CD8-positive, alpha-beta T cell (primary cell): ENCODE measurements at regions of chr17 and their contacts with region 1.

Region 1: GRCh38 chr17:39980351-39981206 is at the start of gene PSMD3:
- DNase-seq: peak; percentile 95 to 100 (median 97)
- ATAC-seq: peak; percentile 94
- H3K4me3 ChIP-seq: peak within 1 kb of the TSS; percentile 67 to 83
- H3K4me3 Mint-ChIP-seq: peak within 1 kb of the TSS; percentile 93
- H3K27ac ChIP-seq: peak within 1 kb of the TSS; percentile 90 to 91
- H3K27ac Mint-ChIP-seq: peak within 1 kb of the TSS; percentile 97
- H3K4me1 ChIP-seq: peaks cover 25% of the 10 kb centered on the region
- H3K4me1 Mint-ChIP-seq: peaks cover 33% of the 10 kb centered on the region
- H3K27me3 ChIP-seq: peaks cover 0 to 3% of the 10 kb centered on the region in 2 experiments
- H3K27me3 Mint-ChIP-seq: no peaks in the 10 kb centered on the region
- CTCF ChIP-seq: peak; percentile 67
- total RNA-seq, gene PSMD3: 66.9 to 68.8 TPM

Region 2: GRCh38 chr17:39547713-39548478 is 432.7 kb before region 1 on chr17:
- CTCF ChIA-PET with region 1: interaction called, 6 read pairs
- POLR2A ChIA-PET with region 1: no interaction called
- intact Hi-C with region 1: loop called in 1 of 2 experiments (anchors 5 kb)
- DNase-seq: peak; percentile 66 to 85 (median 73)
- ATAC-seq: peak; percentile 89
- H3K4me3 ChIP-seq: no peak overlapping the region
- H3K4me3 Mint-ChIP-seq: no peak overlapping the region
- H3K27ac ChIP-seq: no peak overlapping the region
- H3K27ac Mint-ChIP-seq: no peak overlapping the region
- H3K4me1 ChIP-seq: no peaks in the 10 kb centered on the region
- H3K4me1 Mint-ChIP-seq: no peaks in the 10 kb centered on the region
- H3K27me3 ChIP-seq: no peaks in the 10 kb centered on the region
- H3K27me3 Mint-ChIP-seq: no peaks in the 10 kb centered on the region
- CTCF ChIP-seq: peak; percentile 84

Region 3: GRCh38 chr17:39687811-39688518 is 292.6 kb before region 1 on chr17 and contains the start of gene PGAP3:
- CTCF ChIA-PET with region 1: no interaction called
- POLR2A ChIA-PET with region 1: no interaction called
- intact Hi-C with region 1: loop called in 1 of 2 experiments (anchors 1 kb)
- DNase-seq: peak; percentile 54 to 92 (median 85)
- ATAC-seq: peak; percentile 93
- H3K4me3 ChIP-seq: peak within 1 kb of the TSS; percentile 68 to 85
- H3K4me3 Mint-ChIP-seq: peak within 1 kb of the TSS; percentile 97
- H3K27ac ChIP-seq: peak within 1 kb of the TSS; percentile 80 to 86
- H3K27ac Mint-ChIP-seq: peak within 1 kb of the TSS; percentile 98
- H3K4me1 ChIP-seq: peaks cover 17% of the 10 kb centered on the region
- H3K4me1 Mint-ChIP-seq: peaks cover 27% of the 10 kb centered on the region
- H3K27me3 ChIP-seq: peaks cover 0 to 2% of the 10 kb centered on the region in 2 experiments
- H3K27me3 Mint-ChIP-seq: no peaks in the 10 kb centered on the region
- CTCF ChIP-seq: no peak
- total RNA-seq, gene PGAP3: 20.9 to 22.6 TPM

Region 4: DNA sequence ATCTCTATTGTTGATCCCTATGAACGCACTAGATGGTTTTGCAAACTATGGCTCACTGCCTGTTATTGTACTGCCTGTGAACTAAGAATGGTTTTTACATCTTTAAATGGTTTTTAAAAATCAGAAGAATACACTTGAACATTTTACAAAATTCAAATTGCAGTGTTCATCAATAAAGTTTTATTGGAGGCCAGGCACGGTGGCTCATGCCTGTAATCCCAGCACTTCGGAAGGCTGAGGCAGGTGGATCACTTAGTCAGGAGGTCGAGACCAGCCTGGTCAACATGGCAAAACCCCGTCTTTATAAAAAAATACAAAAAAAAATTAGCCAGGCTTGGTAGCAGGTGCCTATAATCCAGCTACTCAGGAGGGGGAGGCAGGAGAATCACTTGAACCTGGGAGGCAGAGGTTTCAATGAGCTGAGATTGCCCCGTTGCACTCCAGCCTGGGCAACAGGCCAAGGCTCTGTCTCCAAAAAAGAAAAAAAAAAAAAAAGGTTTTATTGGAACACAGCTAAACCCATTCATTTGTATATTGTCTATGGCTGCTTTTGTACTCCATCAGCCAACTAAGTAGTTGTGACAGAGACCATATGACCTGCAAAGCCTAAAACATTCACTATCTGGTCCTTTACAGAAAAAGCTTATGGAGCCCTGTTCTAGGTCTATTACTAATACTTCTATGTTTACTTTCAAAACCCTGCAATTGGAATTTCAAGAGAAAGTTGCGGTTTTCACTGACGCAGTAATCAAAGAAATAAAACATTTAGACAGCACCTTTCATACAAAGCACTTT is 135.3 kb before region 1 on chr17:
- CTCF ChIA-PET with region 1: no interaction called
- POLR2A ChIA-PET with region 1: no interaction called
- intact Hi-C with region 1: no loop called
- DNase-seq: peak in 1 of 9 experiments; percentile 30
- ATAC-seq: no peak
- H3K4me3 ChIP-seq: no peak overlapping the region
- H3K4me3 Mint-ChIP-seq: no peak overlapping the region
- H3K27ac ChIP-seq: no peak overlapping the region
- H3K27ac Mint-ChIP-seq: peak overlapping the region; percentile 89
- H3K4me1 ChIP-seq: peaks cover 81% of the 10 kb centered on the region
- H3K4me1 Mint-ChIP-seq: peaks cover 76% of the 10 kb centered on the region
- H3K27me3 ChIP-seq: no peaks in the 10 kb centered on the region
- H3K27me3 Mint-ChIP-seq: no peaks in the 10 kb centered on the region
- CTCF ChIP-seq: no peak

Region 5: DNA sequence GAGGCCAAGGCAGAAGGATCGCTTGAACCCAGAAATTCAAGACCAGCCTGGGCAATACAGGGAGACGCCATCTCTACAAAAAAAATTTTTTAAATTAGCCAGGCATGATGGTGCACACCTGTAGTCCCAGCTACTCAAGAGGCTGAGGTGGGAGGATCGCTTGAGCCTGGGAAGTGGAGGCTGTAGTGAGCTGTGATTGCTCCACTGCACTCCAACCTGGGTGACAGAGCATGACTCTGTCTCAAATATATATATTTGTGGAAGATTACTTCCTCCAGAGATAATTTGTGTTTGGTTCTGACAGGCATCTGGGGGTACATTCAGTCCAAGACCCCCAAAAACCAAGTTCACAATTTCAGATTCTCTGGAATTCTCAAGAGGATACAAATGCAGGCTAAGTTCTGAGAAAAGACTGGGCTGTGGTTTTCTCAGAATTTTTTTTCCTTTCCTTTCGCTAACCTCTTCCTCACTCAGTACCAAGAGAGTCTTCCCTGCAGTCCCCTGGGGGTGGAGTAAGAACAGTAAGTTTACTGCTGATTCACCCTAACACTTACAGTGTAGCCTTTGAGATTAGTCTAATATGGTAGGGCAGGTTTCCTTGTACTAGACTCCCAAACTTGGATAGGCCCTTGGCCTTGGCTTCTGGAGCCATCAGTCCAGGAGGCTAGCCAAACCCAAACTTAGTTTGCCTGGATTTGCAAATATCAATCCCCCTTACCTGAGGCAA is 77.3 kb before region 1 on chr17:
- CTCF ChIA-PET with region 1: no interaction called
- POLR2A ChIA-PET with region 1: no interaction called
- intact Hi-C with region 1: no loop called
- DNase-seq: peak in 2 of 9 experiments; percentile 18 to 46
- ATAC-seq: peak; percentile 58
- H3K4me3 ChIP-seq: no peak overlapping the region
- H3K4me3 Mint-ChIP-seq: peak overlapping the region; percentile 19
- H3K27ac ChIP-seq: peak overlapping the region in 1 of 2 experiments; percentile 38
- H3K27ac Mint-ChIP-seq: peak overlapping the region; percentile 53
- H3K4me1 ChIP-seq: peaks cover 11% of the 10 kb centered on the region
- H3K4me1 Mint-ChIP-seq: peaks cover 16% of the 10 kb centered on the region
- H3K27me3 ChIP-seq: no peaks in the 10 kb centered on the region
- H3K27me3 Mint-ChIP-seq: no peaks in the 10 kb centered on the region
- CTCF ChIP-seq: no peak

Region 6: GRCh38 chr17:39927101-39927928 is 53.3 kb before region 1 on chr17 and contains the starts of genes LRRC3C and ORMDL3:
- CTCF ChIA-PET with region 1: interaction called, 4 read pairs
- POLR2A ChIA-PET with region 1: interaction called, 12 read pairs
- intact Hi-C with region 1: loop called (anchors 1 kb)
- DNase-seq: peak; percentile 80 to 96 (median 91)
- ATAC-seq: peak; percentile 70
- H3K4me3 ChIP-seq: peak within 1 kb of the TSS; percentile 87 to 90
- H3K4me3 Mint-ChIP-seq: peak within 1 kb of the TSS; percentile 96
- H3K27ac ChIP-seq: peak within 1 kb of the TSS; percentile 70 to 71
- H3K27ac Mint-ChIP-seq: peak within 1 kb of the TSS; percentile 91
- H3K4me1 ChIP-seq: peaks cover 50% of the 10 kb centered on the region
- H3K4me1 Mint-ChIP-seq: peaks cover 42% of the 10 kb centered on the region
- H3K27me3 ChIP-seq: no peaks in the 10 kb centered on the region
- H3K27me3 Mint-ChIP-seq: no peaks in the 10 kb centered on the region
- CTCF ChIP-seq: no peak
- total RNA-seq, gene LRRC3C: not detected
- total RNA-seq, gene ORMDL3: 136 to 140 TPM

Region 7: GRCh38 chr17:39963829-39964228 is 16.8 kb before region 1 on chr17:
- CTCF ChIA-PET with region 1: interaction called, 204 read pairs
- POLR2A ChIA-PET with region 1: interaction called, 12 read pairs
- intact Hi-C with region 1: loop called (anchors 1 kb)
- DNase-seq: peak in 8 of 9 experiments; percentile 29 to 68 (median 48)
- ATAC-seq: peak; percentile 77
- H3K4me3 ChIP-seq: no peak overlapping the region
- H3K4me3 Mint-ChIP-seq: peak overlapping the region; percentile 16
- H3K27ac ChIP-seq: no peak overlapping the region
- H3K27ac Mint-ChIP-seq: peak overlapping the region; percentile 76
- H3K4me1 ChIP-seq: peaks cover 30% of the 10 kb centered on the region
- H3K4me1 Mint-ChIP-seq: peaks cover 32% of the 10 kb centered on the region
- H3K27me3 ChIP-seq: peaks cover 0 to 3% of the 10 kb centered on the region in 2 experiments
- H3K27me3 Mint-ChIP-seq: no peaks in the 10 kb centered on the region
- CTCF ChIP-seq: no peak

Region 8: GRCh38 chr17:40098846-40099618 is 118.5 kb after region 1 on chr17:
- CTCF ChIA-PET with region 1: no interaction called
- POLR2A ChIA-PET with region 1: interaction called, 6 read pairs
- intact Hi-C with region 1: loop called in 1 of 2 experiments (anchors 1 kb)
- DNase-seq: peak; percentile 97 to 100 (median 99)
- ATAC-seq: peak; percentile 64
- H3K4me3 ChIP-seq: peak overlapping the region; percentile 75 to 90
- H3K4me3 Mint-ChIP-seq: peak overlapping the region; percentile 94
- H3K27ac ChIP-seq: peak overlapping the region; percentile 79 to 98
- H3K27ac Mint-ChIP-seq: peak overlapping the region; percentile 95
- H3K4me1 ChIP-seq: peaks cover 80% of the 10 kb centered on the region
- H3K4me1 Mint-ChIP-seq: peaks cover 88% of the 10 kb centered on the region
- H3K27me3 ChIP-seq: no peaks in the 10 kb centered on the region
- H3K27me3 Mint-ChIP-seq: no peaks in the 10 kb centered on the region
- CTCF ChIP-seq: no peak

Region 9: DNA sequence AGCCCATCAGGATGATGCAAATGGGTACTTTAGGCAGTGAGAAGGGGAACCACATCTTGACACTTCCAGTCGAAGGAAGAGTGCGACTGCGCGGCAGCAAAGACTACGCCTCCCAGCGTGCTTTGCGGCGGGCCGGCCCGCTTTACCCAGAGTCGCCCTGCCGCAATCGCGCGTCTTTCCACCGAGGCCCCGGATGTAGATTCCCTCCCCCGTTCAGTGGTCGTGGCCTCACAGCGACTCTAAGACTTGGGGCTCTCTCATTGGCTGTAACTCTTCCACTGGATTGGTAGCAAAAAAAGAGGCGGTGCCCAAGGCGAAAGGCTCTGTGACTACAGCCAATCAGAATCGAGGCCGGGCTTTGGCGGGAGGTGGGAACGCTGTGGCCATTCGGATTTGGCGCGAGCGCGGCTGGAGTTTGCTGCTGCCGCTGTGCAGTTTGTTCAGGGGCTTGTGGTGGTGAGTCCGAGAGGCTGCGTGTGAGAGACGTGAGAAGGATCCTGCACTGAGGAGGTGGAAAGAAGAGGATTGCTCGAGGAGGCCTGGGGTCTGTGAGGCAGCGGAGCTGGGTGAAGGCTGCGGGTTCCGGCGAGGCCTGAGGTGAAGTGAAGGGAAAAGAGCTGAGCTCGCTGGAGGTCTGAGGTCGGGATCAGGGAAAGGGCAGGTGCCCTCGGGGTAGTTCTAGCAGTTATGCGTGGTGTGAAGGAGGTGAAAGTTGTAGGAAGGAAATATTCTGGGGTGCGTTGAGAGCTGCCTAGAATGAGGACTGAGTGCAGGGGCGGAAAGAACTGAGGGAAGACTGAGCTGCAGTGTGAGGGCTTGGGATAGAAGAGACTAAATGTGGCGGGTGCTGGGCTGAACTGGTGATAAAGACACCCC is 307.2 kb after region 1 on chr17 and contains the start of gene CDC6:
- CTCF ChIA-PET with region 1: no interaction called
- POLR2A ChIA-PET with region 1: no interaction called
- intact Hi-C with region 1: loop called in 1 of 2 experiments (anchors 1 kb)
- DNase-seq: peak; percentile 97 to 99 (median 98)
- ATAC-seq: peak; percentile 91
- H3K4me3 ChIP-seq: peak within 1 kb of the TSS; percentile 73 to 84
- H3K4me3 Mint-ChIP-seq: peak within 1 kb of the TSS; percentile 97
- H3K27ac ChIP-seq: peak within 1 kb of the TSS; percentile 21 to 36
- H3K27ac Mint-ChIP-seq: peak within 1 kb of the TSS; percentile 89
- H3K4me1 ChIP-seq: peaks cover 5% of the 10 kb centered on the region
- H3K4me1 Mint-ChIP-seq: peaks cover 22% of the 10 kb centered on the region
- H3K27me3 ChIP-seq: no peaks in the 10 kb centered on the region
- H3K27me3 Mint-ChIP-seq: no peaks in the 10 kb centered on the region
- CTCF ChIP-seq: no peak
- total RNA-seq, gene CDC6: 2.0 to 2.9 TPM